ENCODE measurements at regions of chr3 and their contacts with region 1.

Region 1: GRCh38 chr3:124467980-124468902 is 262.0 kb upstream of the UMPS start:
- DNase-seq: peak; percentile 78
- H3K4me3 ChIP-seq: no peak overlapping the region; a peak in 1 of 4 replicates
- H3K27ac ChIP-seq: peak overlapping the region in 1 of 2 experiments; percentile 47; a peak in 1 of 4 replicates
- H3K4me1 ChIP-seq: peaks cover 0 to 10% of the 10 kb centered on the region in 2 experiments; a peak in 2 of 4 replicates
- H3K27me3 ChIP-seq: no peaks in the 10 kb centered on the region
- CTCF ChIP-seq: peak; percentile 99
- EP300 ChIP-seq: no peak
- RAD21 ChIP-seq: peak; percentile 99

Region 2: GRCh38 chr3:124026516-124026915 is 441.7 kb before region 1 on chr3:
- CTCF ChIA-PET with region 1: interaction called, 11 read pairs
- POLR2A ChIA-PET with region 1: no interaction called
- DNase-seq: no peak
- H3K4me3 ChIP-seq: no peak overlapping the region
- H3K27ac ChIP-seq: no peak overlapping the region
- H3K4me1 ChIP-seq: peaks cover 0 to 3% of the 10 kb centered on the region in 2 experiments; a peak in 1 of 4 replicates
- H3K27me3 ChIP-seq: no peaks in the 10 kb centered on the region
- CTCF ChIP-seq: no peak
- EP300 ChIP-seq: no peak
- RAD21 ChIP-seq: no peak

Region 3: DNA sequence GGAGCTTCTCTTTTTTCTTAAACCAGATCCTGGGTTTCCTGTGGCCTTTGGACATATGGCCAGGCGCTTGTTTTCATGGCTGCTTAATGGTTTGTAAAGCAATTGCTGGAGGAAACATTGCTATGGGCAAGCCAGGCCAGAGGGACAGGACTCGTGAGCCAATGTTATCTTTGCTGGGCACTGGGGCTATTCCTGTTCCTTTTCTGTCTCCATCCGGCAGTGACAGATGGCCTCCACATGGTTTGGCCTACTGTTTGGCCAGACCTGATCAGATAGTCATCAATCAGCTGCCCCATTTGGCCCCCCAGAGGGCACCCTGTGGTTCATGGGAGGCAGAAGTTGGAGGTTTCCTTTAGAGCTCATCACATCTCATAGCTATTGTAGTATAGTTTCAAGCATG is 150.2 kb before region 1 on chr3:
- CTCF ChIA-PET with region 1: interaction called, 13 read pairs
- POLR2A ChIA-PET with region 1: no interaction called
- DNase-seq: peak; percentile 69
- H3K4me3 ChIP-seq: no peak overlapping the region
- H3K27ac ChIP-seq: peak overlapping the region in 1 of 2 experiments; percentile 99; a peak in 2 of 4 replicates
- H3K4me1 ChIP-seq: peaks cover 0 to 45% of the 10 kb centered on the region in 2 experiments; a peak in 3 of 4 replicates
- H3K27me3 ChIP-seq: no peaks in the 10 kb centered on the region
- CTCF ChIP-seq: no peak
- EP300 ChIP-seq: peak; percentile 19 to 90; a peak in 2 of 4 replicates
- RAD21 ChIP-seq: no peak; the same call in 1 of the 2 replicates

Region 4: GRCh38 chr3:124398594-124398993 is 69.6 kb before region 1 on chr3:
- CTCF ChIA-PET with region 1: interaction called, 10 read pairs
- POLR2A ChIA-PET with region 1: no interaction called
- DNase-seq: no peak
- H3K4me3 ChIP-seq: no peak overlapping the region
- H3K27ac ChIP-seq: no peak overlapping the region; a peak in 1 of 4 replicates
- H3K4me1 ChIP-seq: peaks cover 0 to 36% of the 10 kb centered on the region in 2 experiments; a peak in 2 of 4 replicates
- H3K27me3 ChIP-seq: no peaks in the 10 kb centered on the region
- CTCF ChIP-seq: no peak
- EP300 ChIP-seq: no peak
- RAD21 ChIP-seq: no peak

Region 5: DNA sequence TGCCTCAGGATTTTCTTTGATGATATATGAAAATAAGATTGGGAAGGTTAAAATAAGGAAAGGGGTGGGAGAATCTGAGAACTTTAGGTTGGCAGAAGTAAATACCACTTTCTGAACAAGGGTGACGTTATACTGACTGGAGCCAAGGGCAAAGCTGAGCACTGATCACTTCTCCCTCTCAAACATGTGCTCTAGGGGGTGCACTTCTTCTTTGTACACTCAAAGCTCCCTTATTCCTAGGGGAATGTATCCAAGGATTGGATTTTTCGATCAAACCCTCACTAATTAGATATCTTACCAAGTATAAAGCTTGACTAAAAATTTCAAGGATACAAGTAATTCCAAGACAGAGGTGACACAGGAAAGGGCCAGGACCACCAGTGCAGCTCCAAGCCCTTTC is 18.1 kb after region 1 on chr3:
- CTCF ChIA-PET with region 1: interaction called, 13 read pairs
- POLR2A ChIA-PET with region 1: no interaction called
- DNase-seq: no peak
- H3K4me3 ChIP-seq: no peak overlapping the region
- H3K27ac ChIP-seq: no peak overlapping the region
- H3K4me1 ChIP-seq: no peaks in the 10 kb centered on the region
- H3K27me3 ChIP-seq: no peaks in the 10 kb centered on the region
- CTCF ChIP-seq: peak; percentile 29
- EP300 ChIP-seq: no peak
- RAD21 ChIP-seq: 0 out of 2 replicates have a peak, but pooled peaks have one; percentile 4

Measured in SK-N-SH (cell line).